HepG2 (cell line): ENCODE measurements at regions of chr6 and their contacts with region 1.

Region 1: GRCh38 chr6:42740725-42741124 is 5.2 kb downstream of the TBCC start:
- DNase-seq: no peak
- ATAC-seq: no peak
- H3K4me3 ChIP-seq: no peak overlapping the region
- H3K27ac ChIP-seq: no peak overlapping the region
- H3K4me1 ChIP-seq: peaks cover 28% of the 10 kb centered on the region
- H3K27me3 ChIP-seq: peaks cover 0 to 6% of the 10 kb centered on the region in 2 experiments; a peak in 2 of 5 replicates
- CTCF ChIP-seq: no peak
- EP300 ChIP-seq: no peak
- POLR2A ChIP-seq: no peak
- RAD21 ChIP-seq: no peak

Region 2: DNA sequence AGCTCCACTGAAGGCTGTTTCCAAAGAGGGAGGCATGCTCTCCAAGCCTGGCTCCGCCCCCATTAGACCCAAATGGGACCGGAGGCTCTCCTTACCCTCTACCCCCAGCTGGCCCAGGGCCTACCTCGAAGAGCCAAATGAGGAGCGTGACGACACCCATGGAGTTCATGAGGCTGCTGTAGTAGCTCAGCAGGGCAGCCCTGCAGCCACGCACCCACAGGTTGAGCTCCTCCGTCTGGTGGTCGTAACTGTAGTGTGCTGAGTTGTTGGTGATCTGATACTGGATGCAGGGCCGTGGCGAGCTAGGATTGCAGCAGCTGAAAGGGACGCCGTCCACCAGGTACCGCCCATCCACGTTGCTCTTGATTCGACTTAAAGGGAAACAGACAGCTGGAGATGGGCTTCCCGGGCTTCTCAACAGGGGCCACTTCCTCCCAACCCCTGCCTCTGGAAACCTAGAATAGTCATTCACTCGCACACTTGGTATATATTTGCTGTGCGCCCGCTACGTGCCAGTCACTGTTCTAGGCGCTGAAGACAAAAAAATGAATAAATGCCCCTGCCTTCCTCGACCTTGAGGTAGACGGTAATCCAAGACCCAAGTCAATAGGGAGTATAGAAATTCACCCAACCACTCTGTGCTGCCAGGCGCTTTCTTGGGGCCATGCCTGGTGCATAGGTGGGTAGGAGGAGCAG is 36.3 kb before region 1 on chr6:
- CTCF ChIA-PET with region 1: no interaction called
- POLR2A ChIA-PET with region 1: interaction called, 4 read pairs
- in situ Hi-C with region 1: no loop called
- intact Hi-C with region 1: loop called (anchors 1 kb)
- DNase-seq: peak; percentile 14
- ATAC-seq: peak; percentile 67
- H3K4me3 ChIP-seq: peak overlapping the region; percentile 47 to 70 (median 53)
- H3K27ac ChIP-seq: no peak overlapping the region
- H3K4me1 ChIP-seq: peaks cover 13% of the 10 kb centered on the region; the same call in 1 of the 2 replicates
- H3K27me3 ChIP-seq: no peaks in the 10 kb centered on the region; a peak in 1 of 5 replicates
- CTCF ChIP-seq: no peak
- EP300 ChIP-seq: no peak
- POLR2A ChIP-seq: peak in 1 of 2 experiments; percentile 21; a peak in 1 of 4 replicates
- RAD21 ChIP-seq: no peak

Region 3: GRCh38 chr6:43026365-43026764 is 285.6 kb after region 1 on chr6:
- CTCF ChIA-PET with region 1: no interaction called
- POLR2A ChIA-PET with region 1: no interaction called
- in situ Hi-C with region 1: no loop called
- intact Hi-C with region 1: no loop called
- DNase-seq: no peak
- ATAC-seq: no peak
- H3K4me3 ChIP-seq: no peak overlapping the region
- H3K27ac ChIP-seq: no peak overlapping the region
- H3K4me1 ChIP-seq: peaks cover 12% of the 10 kb centered on the region
- H3K27me3 ChIP-seq: peaks cover 0 to 3% of the 10 kb centered on the region in 2 experiments; a peak in 1 of 5 replicates
- CTCF ChIP-seq: no peak
- EP300 ChIP-seq: no peak
- POLR2A ChIP-seq: no peak
- RAD21 ChIP-seq: no peak